Right cardiac atrium (tissue), 5 donors: ENCODE measurements at regions of chr4 and their contacts with region 1.

Region 1: GRCh38 chr4:139761461-139761860 is 95.8 kb downstream of the MGST2 start:
- DNase-seq: no peak
- ATAC-seq: peak in 1 of 2 donors; percentile 6
- H3K4me3 ChIP-seq: no peak overlapping the region
- H3K27ac ChIP-seq: peak overlapping the region; percentile 99
- H3K4me1 ChIP-seq: peaks cover 14% of the 10 kb centered on the region
- H3K27me3 ChIP-seq: no peaks in the 10 kb centered on the region

Region 2: DNA sequence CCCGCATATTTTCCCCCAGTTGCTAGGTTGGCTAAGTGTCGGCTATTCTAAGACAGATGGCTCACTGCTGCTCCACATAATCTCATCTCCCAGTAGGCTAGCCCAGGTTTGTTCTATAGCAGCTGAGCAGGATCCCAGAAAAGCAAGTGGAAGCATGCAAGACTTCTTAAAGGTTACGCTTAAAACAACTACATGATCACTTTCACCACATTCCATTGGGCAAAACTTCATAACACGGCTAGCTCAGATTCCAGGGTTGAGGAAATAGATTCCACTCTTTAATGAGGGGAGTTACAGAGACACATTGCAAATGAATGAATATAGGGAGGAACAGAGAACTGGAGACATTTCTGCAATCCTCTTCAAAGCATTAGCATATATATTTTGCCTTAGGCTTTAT is 320.4 kb before region 1 on chr4:
- intact Hi-C with region 1: no loop called
- DNase-seq: no peak
- ATAC-seq: no peak
- H3K4me3 ChIP-seq: no peak overlapping the region
- H3K27ac ChIP-seq: no peak overlapping the region
- H3K4me1 ChIP-seq: no peaks in the 10 kb centered on the region
- H3K27me3 ChIP-seq: no peaks in the 10 kb centered on the region

Region 3: DNA sequence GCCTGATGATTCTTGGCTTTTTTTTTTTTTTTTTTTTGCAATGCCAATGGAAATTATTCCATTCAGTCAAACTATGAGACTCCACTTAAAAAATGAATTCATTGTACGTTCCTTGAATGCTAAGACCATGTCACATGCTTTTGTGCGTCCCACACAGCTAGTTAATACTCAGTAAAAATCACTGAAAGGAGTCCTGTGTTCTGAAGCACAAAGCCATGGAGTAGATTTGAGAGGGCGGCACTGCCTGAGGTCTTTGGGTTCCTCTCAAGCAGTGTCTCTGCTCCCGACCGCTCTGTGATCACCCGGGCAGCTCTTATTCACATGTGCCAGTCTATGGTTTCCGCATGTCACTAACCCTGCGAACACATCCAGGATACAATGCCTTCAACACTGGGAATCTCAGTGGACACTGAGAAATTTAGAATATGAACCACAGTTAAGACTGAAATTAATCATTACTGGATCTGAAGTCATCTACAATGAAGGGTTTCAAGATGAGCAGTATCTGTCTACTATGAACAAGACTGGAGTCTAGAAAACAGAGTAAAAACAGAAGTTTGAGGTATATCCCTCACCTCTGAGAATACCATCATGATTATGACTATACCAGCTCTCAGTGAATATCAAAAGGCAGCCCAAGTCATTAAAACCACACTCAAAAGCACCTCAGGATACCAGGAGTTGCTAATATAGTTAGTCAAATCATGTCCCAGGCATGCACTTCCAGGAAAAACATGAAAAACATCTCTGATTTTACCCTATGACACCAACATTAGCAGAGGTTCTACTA is 97.2 kb after region 1 on chr4:
- intact Hi-C with region 1: loop called in 1 of 4 experiments (anchors 10 kb)
- DNase-seq: no peak
- ATAC-seq: no peak
- H3K4me3 ChIP-seq: no peak overlapping the region
- H3K27ac ChIP-seq: no peak overlapping the region
- H3K4me1 ChIP-seq: no peaks in the 10 kb centered on the region
- H3K27me3 ChIP-seq: no peaks in the 10 kb centered on the region

Region 4: GRCh38 chr4:139919521-139919920 is 158.1 kb after region 1 on chr4:
- intact Hi-C with region 1: loop called in 1 of 4 experiments (anchors 10 kb)
- DNase-seq: peak in 1 of 3 donors; percentile 39
- ATAC-seq: peak; percentile 68 to 78
- H3K4me3 ChIP-seq: no peak overlapping the region
- H3K27ac ChIP-seq: peak overlapping the region; percentile 97
- H3K4me1 ChIP-seq: peaks cover 30% of the 10 kb centered on the region
- H3K27me3 ChIP-seq: no peaks in the 10 kb centered on the region